ENCODE measurements at regions of chr11 and their contacts with region 1.

Region 1: DNA sequence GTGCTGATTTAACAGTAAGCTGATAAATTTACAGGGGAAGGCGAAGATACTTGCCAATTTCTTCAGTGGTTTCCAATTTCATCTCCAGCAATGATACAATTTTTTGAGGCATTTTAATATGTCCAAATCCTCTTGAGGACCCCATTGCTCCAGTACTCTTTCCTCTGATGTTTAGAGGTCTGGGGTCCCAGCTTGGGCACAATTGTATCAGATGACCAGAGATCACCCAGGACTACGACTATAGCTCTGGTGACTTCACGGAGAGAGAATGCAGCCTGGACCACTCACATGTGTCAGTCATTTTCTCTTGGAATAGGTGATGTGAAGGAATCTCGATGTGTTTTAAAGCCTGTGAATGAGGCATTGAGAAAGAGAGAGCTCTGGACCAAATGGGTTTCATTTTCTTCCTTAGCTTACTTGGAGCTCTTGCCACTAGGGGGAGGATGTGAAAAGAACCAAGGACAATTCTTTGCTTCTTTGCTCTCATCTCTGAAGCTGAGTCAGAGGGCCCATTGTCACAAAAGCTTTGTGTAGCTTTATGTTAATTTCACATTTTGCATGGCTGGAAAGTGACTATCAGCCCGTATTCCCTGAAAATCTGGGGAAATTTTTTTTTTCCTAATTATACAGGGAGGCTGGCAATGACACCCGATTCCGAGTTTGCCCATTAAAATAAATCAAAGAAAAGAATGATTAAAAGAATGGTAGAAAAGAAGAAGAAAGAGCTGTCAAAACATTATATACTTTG is 6.7 kb upstream of the CCDC90B start:
- DNase-seq: peak; percentile 51 to 77
- H3K4me3 ChIP-seq: no peak overlapping the region
- H3K4me3 Mint-ChIP-seq: no peak overlapping the region
- H3K27ac Mint-ChIP-seq: no peak overlapping the region
- H3K4me1 ChIP-seq: no peaks in the 10 kb centered on the region
- H3K4me1 Mint-ChIP-seq: no peaks in the 10 kb centered on the region
- H3K27me3 ChIP-seq: no peaks in the 10 kb centered on the region; the same call in 1 of the 2 replicates
- H3K27me3 Mint-ChIP-seq: peaks cover 4% of the 10 kb centered on the region
- CTCF ChIP-seq: peak; percentile 89 to 95

Region 2: DNA sequence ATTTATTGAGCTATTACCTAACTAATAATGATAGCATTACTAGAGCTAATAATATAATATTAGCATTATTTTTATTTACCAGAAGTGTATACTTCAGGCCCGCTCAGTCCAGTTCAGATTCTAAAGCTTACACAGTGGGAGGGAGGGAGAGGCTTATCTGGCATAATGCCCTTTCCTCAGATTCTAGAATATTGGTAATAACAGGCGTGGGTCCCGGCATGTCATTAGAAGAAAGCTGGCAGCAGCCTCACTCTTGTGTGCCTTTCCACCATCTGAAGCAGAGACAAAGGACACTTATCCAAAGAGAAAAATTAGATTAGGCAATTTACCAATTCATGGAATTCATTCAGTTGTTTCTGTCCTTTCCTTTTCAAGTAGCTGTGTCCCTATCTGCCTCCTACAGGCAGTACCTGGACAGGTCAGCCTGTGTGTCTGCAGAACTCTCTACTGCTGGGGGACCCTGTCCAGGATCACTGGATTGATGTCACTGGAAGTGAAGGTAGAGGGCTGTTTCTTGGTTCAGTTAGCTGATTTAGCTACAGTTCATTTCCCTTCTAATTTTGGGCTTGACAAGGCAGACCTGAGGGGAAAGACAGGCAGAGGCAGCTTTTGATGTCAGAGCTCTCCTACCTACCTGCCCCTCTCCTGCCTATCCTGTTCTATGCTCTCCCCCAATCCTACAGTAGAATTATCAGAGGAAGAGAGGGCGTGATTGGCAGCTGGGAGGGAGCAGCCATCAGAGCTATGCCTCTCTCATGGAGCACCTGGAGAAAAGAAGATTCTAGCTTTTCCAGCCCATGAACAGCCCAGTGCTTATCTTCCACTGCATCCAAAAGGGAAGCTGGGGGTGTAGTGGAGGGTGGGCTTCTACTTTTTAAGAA is 13.6 kb after region 1 on chr11:
- CTCF ChIA-PET with region 1: interaction called, 10 read pairs
- POLR2A ChIA-PET with region 1: no interaction called
- intact Hi-C with region 1: no loop called
- DNase-seq: no peak
- H3K4me3 ChIP-seq: no peak overlapping the region
- H3K4me3 Mint-ChIP-seq: no peak overlapping the region
- H3K27ac Mint-ChIP-seq: no peak overlapping the region
- H3K4me1 ChIP-seq: no peaks in the 10 kb centered on the region
- H3K4me1 Mint-ChIP-seq: peaks cover 4% of the 10 kb centered on the region
- H3K27me3 ChIP-seq: peaks cover 3% of the 10 kb centered on the region; the same call in 1 of the 2 replicates
- H3K27me3 Mint-ChIP-seq: no peaks in the 10 kb centered on the region
- CTCF ChIP-seq: no peak

Region 3: GRCh38 chr11:83317757-83318690 is 25.1 kb after region 1 on chr11:
- CTCF ChIA-PET with region 1: interaction called, 7 read pairs
- POLR2A ChIA-PET with region 1: no interaction called
- intact Hi-C with region 1: loop called (anchors 2 kb)
- DNase-seq: no peak
- H3K4me3 ChIP-seq: no peak overlapping the region
- H3K4me3 Mint-ChIP-seq: no peak overlapping the region
- H3K27ac Mint-ChIP-seq: no peak overlapping the region
- H3K4me1 ChIP-seq: peaks cover 20% of the 10 kb centered on the region
- H3K4me1 Mint-ChIP-seq: peaks cover 24% of the 10 kb centered on the region
- H3K27me3 ChIP-seq: no peaks in the 10 kb centered on the region
- H3K27me3 Mint-ChIP-seq: peaks cover 3% of the 10 kb centered on the region
- CTCF ChIP-seq: no peak

Region 4: DNA sequence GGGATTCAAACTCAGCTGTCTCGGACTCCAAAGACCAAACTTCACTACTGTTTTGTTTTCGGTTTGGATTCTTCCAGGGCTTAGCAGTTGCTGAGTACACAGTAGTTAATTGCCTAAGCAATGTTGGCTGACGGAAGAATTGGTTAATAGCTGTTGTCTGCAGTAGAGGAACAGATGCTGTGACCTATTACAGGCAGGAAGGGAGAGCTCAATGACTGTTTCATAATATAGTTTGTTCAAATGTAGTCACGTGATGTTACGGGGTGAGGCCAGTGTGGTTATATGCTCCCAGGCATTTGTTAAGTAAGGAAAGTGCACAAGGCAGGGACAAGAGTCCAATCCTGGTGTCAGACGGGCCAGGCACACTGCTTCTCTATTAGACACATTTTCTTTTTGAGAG is 215.9 kb after region 1 on chr11:
- CTCF ChIA-PET with region 1: no interaction called
- POLR2A ChIA-PET with region 1: no interaction called
- intact Hi-C with region 1: loop called (anchors 5 kb)
- DNase-seq: peak in 1 of 2 experiments; percentile 46
- H3K4me3 ChIP-seq: no peak overlapping the region
- H3K4me3 Mint-ChIP-seq: no peak overlapping the region
- H3K27ac Mint-ChIP-seq: peak overlapping the region; percentile 30
- H3K4me1 ChIP-seq: peaks cover 10% of the 10 kb centered on the region
- H3K4me1 Mint-ChIP-seq: peaks cover 27% of the 10 kb centered on the region
- H3K27me3 ChIP-seq: no peaks in the 10 kb centered on the region
- H3K27me3 Mint-ChIP-seq: no peaks in the 10 kb centered on the region
- CTCF ChIP-seq: no peak

Region 5: GRCh38 chr11:83521647-83522596 is 229.0 kb after region 1 on chr11:
- CTCF ChIA-PET with region 1: interaction called, 6 read pairs
- POLR2A ChIA-PET with region 1: no interaction called
- intact Hi-C with region 1: loop called (anchors 2 kb)
- DNase-seq: peak; percentile 52 to 58
- H3K4me3 ChIP-seq: no peak overlapping the region
- H3K4me3 Mint-ChIP-seq: no peak overlapping the region
- H3K27ac Mint-ChIP-seq: no peak overlapping the region
- H3K4me1 ChIP-seq: no peaks in the 10 kb centered on the region
- H3K4me1 Mint-ChIP-seq: no peaks in the 10 kb centered on the region
- H3K27me3 ChIP-seq: no peaks in the 10 kb centered on the region
- H3K27me3 Mint-ChIP-seq: no peaks in the 10 kb centered on the region
- CTCF ChIP-seq: peak; percentile 58 to 59

Region 6: DNA sequence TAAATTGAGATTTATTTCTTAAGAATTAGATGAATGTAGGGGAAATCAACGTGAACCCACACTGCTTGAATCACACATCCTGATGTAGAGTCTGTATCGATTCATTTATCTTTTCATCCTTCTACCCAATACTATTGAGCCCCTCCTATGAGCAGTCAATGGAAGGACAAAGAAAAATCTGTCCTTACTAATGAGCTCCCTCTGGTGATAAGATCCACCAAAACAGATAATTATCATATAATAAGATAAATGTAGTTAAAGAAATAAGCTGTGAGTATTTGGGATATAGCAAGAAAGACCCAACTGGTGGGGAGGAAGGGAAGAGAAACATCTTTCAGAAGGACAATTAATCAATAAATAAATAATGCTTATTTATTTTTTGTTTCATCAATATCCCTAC is 378.4 kb after region 1 on chr11:
- CTCF ChIA-PET with region 1: interaction called, 14 read pairs
- POLR2A ChIA-PET with region 1: no interaction called
- intact Hi-C with region 1: no loop called
- DNase-seq: no peak
- H3K4me3 ChIP-seq: no peak overlapping the region
- H3K4me3 Mint-ChIP-seq: no peak overlapping the region
- H3K27ac Mint-ChIP-seq: no peak overlapping the region
- H3K4me1 ChIP-seq: peaks cover 10% of the 10 kb centered on the region; the same call in 1 of the 2 replicates
- H3K4me1 Mint-ChIP-seq: no peaks in the 10 kb centered on the region
- H3K27me3 ChIP-seq: no peaks in the 10 kb centered on the region
- H3K27me3 Mint-ChIP-seq: no peaks in the 10 kb centered on the region
- CTCF ChIP-seq: peak in 1 of 2 experiments; percentile 11

Measured in Caco-2 (cell line).